Head of caudate nucleus (tissue), 42 donors: ENCODE measurements at regions of chr1 and their contacts with region 1.

Region 1: DNA sequence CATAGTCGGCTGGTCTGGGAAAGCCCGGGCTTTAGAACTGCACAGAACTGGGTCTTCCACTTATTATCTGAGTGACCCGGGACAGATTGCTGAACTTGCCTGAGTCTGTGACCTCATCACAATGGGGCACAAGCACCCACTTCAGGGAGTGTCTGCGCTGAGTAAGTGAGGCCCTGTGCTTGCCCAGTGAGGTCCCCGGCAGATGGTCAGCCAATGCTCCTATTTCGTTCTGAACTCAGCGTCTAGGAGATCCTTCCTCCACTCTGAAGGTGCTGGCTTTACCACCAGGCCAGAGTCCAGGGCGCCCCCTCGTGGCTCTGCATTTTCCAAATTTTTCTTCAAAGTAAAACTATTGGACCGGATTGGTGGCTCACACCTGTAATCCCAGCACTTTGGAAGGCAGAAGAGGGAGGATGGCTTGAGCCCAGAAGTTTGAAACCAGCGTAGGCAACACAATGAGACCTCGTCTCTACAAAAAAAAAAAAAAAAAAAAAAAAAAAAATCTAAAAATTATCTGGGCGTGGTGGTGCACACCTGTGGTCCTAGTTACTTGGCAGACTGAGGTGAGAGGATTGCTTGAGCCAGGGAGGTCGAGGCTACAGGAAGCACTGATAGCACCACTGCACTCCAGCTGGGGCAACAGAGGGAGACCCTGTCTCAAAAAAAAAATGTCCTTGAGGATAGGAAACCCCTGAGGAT is 61.7 kb downstream of the FCRL5 start:
- DNase-seq: peak in 41 of 42 donors; percentile 31 to 85 (median 67)

Region 2: GRCh38 chr1:157193702-157194391 is 296.8 kb before region 1 on chr1:
- intact Hi-C with region 1: loop called (anchors 10 kb)
- DNase-seq: peak; percentile 22 to 86 (median 70)

Region 3: DNA sequence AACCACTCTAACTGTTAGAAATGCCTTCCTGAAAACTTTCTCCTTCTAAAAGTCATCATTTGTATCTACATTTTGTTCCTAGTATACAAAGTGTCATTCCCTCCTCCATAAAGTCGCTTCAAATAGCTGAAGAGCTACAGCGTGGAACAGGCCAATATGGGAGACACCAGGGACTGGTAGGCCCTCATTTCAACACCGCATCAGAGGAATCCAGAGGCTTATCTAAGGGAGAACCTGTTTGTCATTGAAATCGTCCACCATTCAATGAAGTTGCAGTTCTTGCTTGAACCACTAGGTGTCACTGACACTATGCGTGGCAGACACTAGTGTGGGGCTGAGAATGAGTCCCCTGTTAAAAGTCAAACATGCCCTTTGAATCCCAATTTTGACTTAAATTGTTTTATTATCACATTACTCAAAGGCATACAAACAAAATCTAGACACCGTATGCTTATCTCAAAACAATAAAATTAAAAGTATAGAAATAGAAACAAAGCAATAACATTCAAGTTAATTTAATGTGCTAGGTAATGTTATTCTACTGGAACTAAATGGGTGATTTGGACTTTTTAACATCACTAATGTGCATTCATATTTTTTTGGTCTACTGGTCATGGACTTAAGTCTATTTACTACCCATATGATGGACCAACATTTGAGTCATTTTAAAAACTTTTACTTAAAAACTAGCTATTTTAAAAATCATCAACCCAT is 120.7 kb before region 1 on chr1:
- intact Hi-C with region 1: loop called (anchors 5 kb)
- DNase-seq: peak in 28 of 42 donors; percentile 14 to 80 (median 45)